ENCODE measurements at regions of chr16 and their contacts with region 1.

Region 1: DNA sequence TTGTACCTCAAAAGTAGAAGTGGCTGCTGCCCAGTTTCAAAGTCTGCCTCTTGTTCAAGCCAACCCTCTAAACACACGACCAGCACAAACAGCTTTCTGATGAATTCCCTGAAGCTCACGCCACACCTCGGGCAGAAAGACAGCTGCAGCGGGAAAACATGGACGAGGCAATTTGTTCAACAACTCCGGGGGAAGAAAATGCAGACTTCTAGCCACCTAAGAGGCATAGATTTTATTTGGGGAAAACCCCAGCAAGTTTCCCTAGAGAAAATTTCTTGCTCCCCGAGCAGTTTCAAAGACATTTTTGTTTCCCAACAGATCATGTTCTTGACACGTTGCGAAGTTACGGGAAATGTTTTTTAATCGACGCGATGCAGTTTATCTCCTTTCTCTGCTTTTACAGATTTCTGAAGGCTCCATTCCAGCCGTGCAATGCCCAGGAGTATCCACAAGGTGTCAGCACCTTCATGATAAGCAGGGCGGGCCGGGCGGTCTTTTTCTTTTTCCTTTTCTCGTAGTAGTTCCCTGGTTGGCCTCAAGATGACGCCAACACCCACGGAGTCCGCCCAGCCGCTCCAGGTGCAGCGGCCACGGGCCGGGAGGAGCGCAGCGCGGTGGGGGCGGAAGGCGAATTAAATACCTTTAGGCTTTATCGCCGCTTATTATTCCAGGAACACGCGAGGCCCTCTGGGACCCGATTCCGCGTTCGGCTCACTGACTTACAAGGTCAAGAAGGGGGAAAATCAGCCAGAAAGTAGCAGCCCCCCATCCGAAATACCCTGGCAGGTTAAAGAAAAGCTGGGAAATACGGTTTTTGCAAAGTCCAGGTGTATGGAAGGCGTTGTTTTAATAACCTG is 2.9 kb upstream of the FOXC2 start:
- DNase-seq: peak; percentile 80 to 92 (median 88)
- ATAC-seq: peak; percentile 100
- H3K4me3 ChIP-seq: no peak overlapping the region
- H3K27ac ChIP-seq: no peak overlapping the region
- H3K4me1 ChIP-seq: peaks cover 0 to 30% of the 10 kb centered on the region in 2 donors
- H3K27me3 ChIP-seq: peaks cover 54 to 94% of the 10 kb centered on the region in 2 donors
- CTCF ChIP-seq: peak; percentile 98 to 100

Region 2: GRCh38 chr16:86604436-86605193 is 40.9 kb after region 1 on chr16:
- intact Hi-C with region 1: no loop called
- DNase-seq: no peak
- ATAC-seq: no peak
- H3K4me3 ChIP-seq: peak overlapping the region in 1 of 2 donors; percentile 33
- H3K27ac ChIP-seq: no peak overlapping the region
- H3K4me1 ChIP-seq: no peaks in the 10 kb centered on the region
- H3K27me3 ChIP-seq: peaks cover 0 to 28% of the 10 kb centered on the region in 2 donors
- CTCF ChIP-seq: no peak

Region 3: GRCh38 chr16:86640265-86640843 is 76.6 kb after region 1 on chr16:
- intact Hi-C with region 1: no loop called
- DNase-seq: peak in 1 of 4 donors; percentile 45
- ATAC-seq: no peak
- H3K4me3 ChIP-seq: no peak overlapping the region
- H3K27ac ChIP-seq: no peak overlapping the region
- H3K4me1 ChIP-seq: no peaks in the 10 kb centered on the region
- H3K27me3 ChIP-seq: peaks cover 0 to 33% of the 10 kb centered on the region in 2 donors
- CTCF ChIP-seq: no peak

Region 4: GRCh38 chr16:87062569-87063442 is 499.1 kb after region 1 on chr16:
- intact Hi-C with region 1: loop called in 1 of 2 experiments (anchors 5 kb)
- DNase-seq: peak in 3 of 4 donors; percentile 62 to 80 (median 66)
- ATAC-seq: peak; percentile 95
- H3K4me3 ChIP-seq: no peak overlapping the region
- H3K27ac ChIP-seq: no peak overlapping the region
- H3K4me1 ChIP-seq: peaks cover 0 to 23% of the 10 kb centered on the region in 2 donors
- H3K27me3 ChIP-seq: peaks cover 5 to 62% of the 10 kb centered on the region in 2 donors
- CTCF ChIP-seq: peak; percentile 61 to 70

Region 5: GRCh38 chr16:87278191-87279095 is 714.7 kb after region 1 on chr16:
- intact Hi-C with region 1: loop called in 1 of 2 experiments (anchors 5 kb)
- DNase-seq: peak; percentile 63 to 89 (median 78)
- ATAC-seq: peak; percentile 99
- H3K4me3 ChIP-seq: no peak overlapping the region
- H3K27ac ChIP-seq: no peak overlapping the region
- H3K4me1 ChIP-seq: no peaks in the 10 kb centered on the region
- H3K27me3 ChIP-seq: peaks cover 0 to 26% of the 10 kb centered on the region in 2 donors
- CTCF ChIP-seq: peak; percentile 77

Measured in left lung (tissue), 14 donors.